ENCODE measurements at regions of chr12 and their contacts with region 1.

Region 1: DNA sequence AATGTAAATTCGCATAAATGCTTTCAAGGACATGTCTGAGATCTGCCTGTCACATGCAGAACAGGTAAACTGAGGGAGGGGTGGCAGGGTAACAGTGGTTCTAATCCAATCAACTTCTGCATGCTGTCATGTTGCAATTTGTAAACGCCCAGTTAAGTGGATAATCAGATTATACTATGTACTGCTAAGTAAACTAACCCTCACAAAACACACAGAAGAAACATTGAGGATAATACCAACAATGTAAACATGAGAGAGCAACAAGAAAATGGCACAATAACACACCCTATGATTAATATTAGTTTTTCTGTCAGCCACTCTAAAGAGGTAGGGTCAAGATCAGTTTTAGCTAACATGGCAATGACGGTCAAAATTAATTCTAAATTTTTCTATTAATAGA is 123.7 kb downstream of the KIF21A start:
- DNase-seq: no peak
- ATAC-seq: no peak

Region 2: GRCh38 chr12:39267886-39268285 is 51.3 kb before region 1 on chr12:
- intact Hi-C with region 1: no loop called
- DNase-seq: no peak
- ATAC-seq: no peak

Region 3: DNA sequence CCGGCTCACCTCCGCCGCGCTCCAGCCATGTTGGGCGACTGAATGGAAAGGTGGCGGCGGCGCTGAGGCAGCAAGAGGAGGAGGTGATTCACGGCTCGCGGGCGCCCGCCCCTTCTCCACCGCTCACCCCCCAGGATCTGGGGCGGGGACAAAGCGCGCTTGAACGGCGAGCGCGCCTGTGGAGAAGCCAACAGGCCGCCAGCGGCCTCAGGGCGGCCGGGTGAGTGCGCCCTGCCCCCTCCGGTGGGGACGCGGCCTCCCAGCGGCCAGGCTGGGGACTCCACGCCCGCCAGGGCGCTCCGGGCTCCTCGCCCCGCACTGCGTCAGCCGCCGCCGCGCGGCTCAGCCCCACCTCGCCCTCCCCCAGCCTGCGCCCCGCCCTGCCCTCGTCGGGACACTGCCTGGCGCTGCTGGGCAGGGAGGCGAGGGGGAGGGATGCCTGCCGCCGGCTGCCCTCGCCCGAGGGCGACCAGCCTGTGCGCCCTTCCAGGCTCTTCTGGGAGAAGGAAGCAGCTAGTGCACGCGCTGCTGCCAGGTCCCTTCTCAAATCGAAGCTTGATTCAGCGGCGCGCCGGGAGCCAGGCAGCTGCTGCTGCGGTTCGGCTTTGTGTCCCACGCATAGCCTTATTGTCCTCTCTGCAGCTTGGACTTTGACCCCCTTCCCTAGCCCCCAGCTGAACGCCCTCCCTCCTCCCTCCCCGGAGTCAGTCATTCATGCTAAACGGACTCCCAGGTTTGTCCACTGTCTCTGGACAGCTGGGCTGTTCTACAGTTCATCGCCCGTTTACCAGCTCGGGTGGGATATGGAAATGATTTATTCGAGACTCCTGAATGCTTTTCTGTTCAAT is 124.1 kb after region 1 on chr12 and contains the start of gene KIF21A:
- intact Hi-C with region 1: loop called in 1 of 2 experiments (anchors 5 kb)
- DNase-seq: peak; percentile 92
- ATAC-seq: peak; percentile 97 to 98
- total RNA-seq, gene KIF21A: 31.9 to 40.0 TPM

Region 4: GRCh38 chr12:39692258-39692853 is 373.2 kb after region 1 on chr12:
- intact Hi-C with region 1: loop called in 1 of 2 experiments (anchors 5 kb)
- DNase-seq: no peak
- ATAC-seq: no peak